Activated CD8-positive, alpha-beta memory T cell treated with anti-CD3 and anti-CD28 coated beads, Interleukin-2, amount 10 ng/mL, durations not matched to agents 7 days and 5 days (primary cell): ENCODE measurements at regions of chr1 and their contacts with region 1.

Region 1: DNA sequence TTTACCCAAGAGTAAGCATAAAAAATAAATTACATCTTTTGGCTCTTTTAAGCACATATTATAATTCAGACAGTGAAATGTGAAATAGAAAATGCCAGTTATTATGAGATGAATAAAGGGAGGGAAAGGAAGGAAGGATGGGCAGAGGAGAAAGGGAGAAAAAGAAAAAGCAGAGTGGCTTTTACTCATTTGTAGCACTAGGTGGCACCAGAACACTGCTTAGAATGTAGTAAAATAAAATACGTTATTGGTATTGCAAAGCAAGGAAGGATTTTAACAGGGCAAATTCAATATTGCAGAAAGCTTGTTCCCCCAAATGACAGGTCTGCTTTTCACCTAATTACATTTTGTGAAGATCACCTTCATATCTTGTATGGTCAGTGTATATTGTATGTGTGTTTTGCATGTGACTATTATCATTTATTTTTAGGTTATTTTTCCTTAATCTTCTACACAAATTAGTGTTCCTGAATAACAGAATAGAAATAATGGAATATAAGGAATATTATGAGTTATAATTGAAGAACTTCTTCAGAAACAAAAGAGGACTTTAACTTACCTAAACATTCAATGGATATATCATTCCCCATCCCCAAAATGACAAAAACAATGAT is 9.1 kb upstream of the PCNX2 start:
- DNase-seq: no peak
- ATAC-seq: no peak
- H3K4me3 Mint-ChIP-seq: no peak overlapping the region
- H3K27ac Mint-ChIP-seq: no peak overlapping the region
- H3K4me1 Mint-ChIP-seq: peaks cover 2% of the 10 kb centered on the region
- H3K27me3 Mint-ChIP-seq: peaks cover 15% of the 10 kb centered on the region

Region 2: DNA sequence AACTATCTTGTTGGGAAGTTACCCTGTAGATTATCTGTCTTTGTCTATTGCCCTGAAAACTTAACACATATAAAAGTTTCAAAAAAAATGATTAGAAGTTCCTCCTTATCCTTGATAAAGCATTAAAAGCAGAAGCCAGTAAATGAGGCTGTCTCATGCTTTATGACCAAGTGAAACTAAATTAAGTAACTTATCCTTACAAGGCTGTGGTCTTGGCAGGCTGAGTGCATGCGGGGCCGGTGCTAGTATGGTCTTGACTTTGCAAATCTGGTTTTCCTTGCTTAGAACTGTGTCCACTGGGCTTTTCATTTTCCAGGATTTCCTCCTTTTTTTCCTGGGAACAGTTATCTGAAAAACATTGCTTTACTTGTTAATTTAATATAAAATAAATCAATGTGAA is 52.2 kb before region 1 on chr1:
- CTCF ChIA-PET with region 1: no interaction called
- DNase-seq: no peak
- ATAC-seq: no peak
- H3K4me3 Mint-ChIP-seq: no peak overlapping the region
- H3K27ac Mint-ChIP-seq: no peak overlapping the region
- H3K4me1 Mint-ChIP-seq: no peaks in the 10 kb centered on the region
- H3K27me3 Mint-ChIP-seq: no peaks in the 10 kb centered on the region

Region 3: GRCh38 chr1:233315718-233316301 is 11.2 kb after region 1 on chr1:
- CTCF ChIA-PET with region 1: interaction called, 17 read pairs
- DNase-seq: no peak
- ATAC-seq: no peak
- H3K4me3 Mint-ChIP-seq: no peak overlapping the region
- H3K27ac Mint-ChIP-seq: no peak overlapping the region
- H3K4me1 Mint-ChIP-seq: no peaks in the 10 kb centered on the region
- H3K27me3 Mint-ChIP-seq: peaks cover 42% of the 10 kb centered on the region